CD4-positive, alpha-beta T cell (primary cell): ENCODE measurements at regions of chr3 and their contacts with region 1.

Region 1: DNA sequence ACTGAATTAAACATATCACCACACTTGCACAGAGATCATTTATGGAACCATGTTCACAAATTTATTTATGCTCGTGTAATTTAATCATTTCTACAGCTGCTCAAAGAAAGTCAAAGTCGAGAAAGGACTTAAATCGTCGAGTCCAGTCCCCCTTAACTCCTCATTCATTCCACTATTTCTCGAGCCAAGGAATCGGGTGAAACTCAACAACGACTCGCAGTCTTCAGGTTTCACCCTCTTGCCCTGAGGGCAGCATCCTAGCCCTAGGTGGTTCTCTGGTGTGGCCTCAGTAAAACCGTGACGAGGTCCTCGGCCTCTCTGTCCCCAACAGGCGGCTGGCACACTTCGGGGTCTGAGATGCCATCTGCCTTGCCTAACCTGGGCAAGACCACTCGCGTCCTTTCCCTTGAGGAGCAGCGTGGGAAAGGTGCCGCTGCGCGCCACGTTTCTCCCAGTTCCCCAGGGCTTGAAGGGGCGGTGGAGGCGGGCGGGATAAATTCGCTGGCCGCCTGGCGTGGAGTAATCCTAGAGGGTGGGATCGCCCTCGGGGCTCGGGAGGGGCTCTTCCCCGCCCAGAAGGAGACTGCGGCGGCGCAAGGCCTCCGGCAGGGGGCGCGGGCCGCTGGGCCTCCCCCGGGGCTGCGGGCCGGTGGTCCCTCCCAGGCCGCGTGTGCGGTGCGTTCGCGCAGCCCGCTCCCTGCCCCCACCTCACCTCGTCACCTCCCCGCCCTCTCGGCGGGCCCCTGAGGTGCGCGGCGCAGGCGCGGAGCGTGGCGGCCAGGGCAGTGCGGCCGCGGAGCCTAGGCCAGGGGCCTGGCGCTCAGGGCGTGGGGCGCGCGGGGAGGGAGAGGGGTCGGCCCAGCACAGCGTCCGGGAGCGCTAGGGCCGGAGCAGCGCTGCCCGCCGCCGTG is at the start of gene ZNF639:
- DNase-seq: peak; percentile 73 to 95 (median 80)
- ATAC-seq: peak; percentile 84
- H3K4me3 ChIP-seq: peak within 1 kb of the TSS; percentile 72
- H3K4me3 Mint-ChIP-seq: peak within 1 kb of the TSS; percentile 92
- H3K27ac ChIP-seq: peak within 1 kb of the TSS; percentile 76 to 97
- H3K27ac Mint-ChIP-seq: peak within 1 kb of the TSS; percentile 98
- H3K4me1 ChIP-seq: peaks cover 25% of the 10 kb centered on the region
- H3K4me1 Mint-ChIP-seq: peaks cover 37% of the 10 kb centered on the region
- H3K27me3 ChIP-seq: no peaks in the 10 kb centered on the region
- H3K27me3 Mint-ChIP-seq: no peaks in the 10 kb centered on the region
- CTCF ChIP-seq: peak; percentile 73
- total RNA-seq, gene ZNF639: 88.1 to 90.8 TPM

Region 2: GRCh38 chr3:179015551-179016020 is 307.0 kb before region 1 on chr3:
- CTCF ChIA-PET with region 1: interaction called, 3 read pairs
- POLR2A ChIA-PET with region 1: interaction called, 7 read pairs
- intact Hi-C with region 1: loop called in 1 of 2 experiments (anchors 2 kb)
- DNase-seq: peak in 12 of 14 experiments; percentile 6 to 90 (median 58)
- ATAC-seq: peak; percentile 98
- H3K4me3 ChIP-seq: no peak overlapping the region
- H3K4me3 Mint-ChIP-seq: no peak overlapping the region
- H3K27ac ChIP-seq: no peak overlapping the region
- H3K27ac Mint-ChIP-seq: peak overlapping the region; percentile 31
- H3K4me1 ChIP-seq: peaks cover 4% of the 10 kb centered on the region
- H3K4me1 Mint-ChIP-seq: peaks cover 45% of the 10 kb centered on the region
- H3K27me3 ChIP-seq: no peaks in the 10 kb centered on the region
- H3K27me3 Mint-ChIP-seq: no peaks in the 10 kb centered on the region
- CTCF ChIP-seq: peak; percentile 88

Region 3: DNA sequence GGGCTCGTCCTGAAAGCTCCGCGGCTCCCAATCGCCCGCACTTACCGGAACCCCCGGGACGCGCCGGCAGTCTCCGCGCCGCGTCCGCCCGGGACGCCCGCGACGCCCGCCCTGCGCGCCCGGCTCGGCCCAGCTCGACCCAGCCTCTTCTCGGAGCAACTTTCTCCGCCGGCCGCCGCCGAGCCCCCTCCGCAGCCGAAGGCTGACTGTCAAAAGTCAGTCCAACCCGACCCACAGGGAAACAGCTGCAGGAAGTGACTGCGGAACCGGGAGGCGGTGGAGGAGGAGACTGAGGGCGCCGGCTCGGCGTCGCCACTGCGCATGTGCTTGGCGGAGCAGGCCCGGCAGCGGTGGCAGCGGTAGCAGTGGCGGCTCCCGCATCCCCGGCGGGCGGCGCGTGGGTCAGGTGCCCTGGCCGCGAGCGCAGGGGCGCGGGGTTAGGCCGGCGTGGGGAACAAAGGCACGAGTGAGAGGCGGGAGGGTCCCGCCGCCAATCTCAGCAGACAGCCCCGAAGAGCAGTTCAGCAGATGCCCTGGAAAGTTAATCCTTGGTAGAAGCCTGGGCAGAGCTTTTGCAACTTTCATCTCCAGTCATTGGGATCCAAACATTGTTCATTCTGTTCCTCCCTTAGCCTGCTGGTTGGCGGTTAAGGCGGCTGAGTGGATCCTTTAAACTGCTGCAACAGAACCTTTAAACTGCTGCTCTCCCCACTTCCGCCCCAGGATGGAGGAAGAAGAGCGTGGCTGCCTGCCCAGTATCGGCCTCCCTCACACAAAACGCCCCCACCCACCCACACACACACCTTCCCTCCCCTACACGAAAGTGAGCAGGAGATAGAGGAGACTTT is 250.8 kb before region 1 on chr3 and contains the start of gene ZMAT3:
- CTCF ChIA-PET with region 1: interaction called, 3 read pairs
- POLR2A ChIA-PET with region 1: interaction called, 13 read pairs
- intact Hi-C with region 1: loop called in 1 of 2 experiments (anchors 2 kb)
- DNase-seq: peak; percentile 72 to 94 (median 81)
- ATAC-seq: peak; percentile 81
- H3K4me3 ChIP-seq: peak within 1 kb of the TSS; percentile 78
- H3K4me3 Mint-ChIP-seq: peak within 1 kb of the TSS; percentile 99
- H3K27ac ChIP-seq: peak within 1 kb of the TSS; percentile 76 to 92
- H3K27ac Mint-ChIP-seq: peak within 1 kb of the TSS; percentile 86
- H3K4me1 ChIP-seq: peaks cover 30% of the 10 kb centered on the region
- H3K4me1 Mint-ChIP-seq: peaks cover 69% of the 10 kb centered on the region
- H3K27me3 ChIP-seq: no peaks in the 10 kb centered on the region
- H3K27me3 Mint-ChIP-seq: no peaks in the 10 kb centered on the region
- CTCF ChIP-seq: no peak
- total RNA-seq, gene ZMAT3: 10.2 to 13.0 TPM

Region 4: GRCh38 chr3:179562591-179563270 is 240.2 kb after region 1 on chr3 and contains the start of gene ACTL6A:
- CTCF ChIA-PET with region 1: no interaction called
- POLR2A ChIA-PET with region 1: interaction called, 5 read pairs
- intact Hi-C with region 1: loop called (anchors 5 kb)
- DNase-seq: peak; percentile 94 to 99 (median 98)
- ATAC-seq: peak; percentile 90
- H3K4me3 ChIP-seq: peak within 1 kb of the TSS; percentile 83
- H3K4me3 Mint-ChIP-seq: peak within 1 kb of the TSS; percentile 91
- H3K27ac ChIP-seq: peak within 1 kb of the TSS; percentile 38 to 57
- H3K27ac Mint-ChIP-seq: peak within 1 kb of the TSS; percentile 85
- H3K4me1 ChIP-seq: peaks cover 31% of the 10 kb centered on the region
- H3K4me1 Mint-ChIP-seq: peaks cover 30% of the 10 kb centered on the region
- H3K27me3 ChIP-seq: no peaks in the 10 kb centered on the region
- H3K27me3 Mint-ChIP-seq: peaks cover 5% of the 10 kb centered on the region
- CTCF ChIP-seq: no peak
- total RNA-seq, gene ACTL6A: 19.0 to 19.3 TPM

Region 5: DNA sequence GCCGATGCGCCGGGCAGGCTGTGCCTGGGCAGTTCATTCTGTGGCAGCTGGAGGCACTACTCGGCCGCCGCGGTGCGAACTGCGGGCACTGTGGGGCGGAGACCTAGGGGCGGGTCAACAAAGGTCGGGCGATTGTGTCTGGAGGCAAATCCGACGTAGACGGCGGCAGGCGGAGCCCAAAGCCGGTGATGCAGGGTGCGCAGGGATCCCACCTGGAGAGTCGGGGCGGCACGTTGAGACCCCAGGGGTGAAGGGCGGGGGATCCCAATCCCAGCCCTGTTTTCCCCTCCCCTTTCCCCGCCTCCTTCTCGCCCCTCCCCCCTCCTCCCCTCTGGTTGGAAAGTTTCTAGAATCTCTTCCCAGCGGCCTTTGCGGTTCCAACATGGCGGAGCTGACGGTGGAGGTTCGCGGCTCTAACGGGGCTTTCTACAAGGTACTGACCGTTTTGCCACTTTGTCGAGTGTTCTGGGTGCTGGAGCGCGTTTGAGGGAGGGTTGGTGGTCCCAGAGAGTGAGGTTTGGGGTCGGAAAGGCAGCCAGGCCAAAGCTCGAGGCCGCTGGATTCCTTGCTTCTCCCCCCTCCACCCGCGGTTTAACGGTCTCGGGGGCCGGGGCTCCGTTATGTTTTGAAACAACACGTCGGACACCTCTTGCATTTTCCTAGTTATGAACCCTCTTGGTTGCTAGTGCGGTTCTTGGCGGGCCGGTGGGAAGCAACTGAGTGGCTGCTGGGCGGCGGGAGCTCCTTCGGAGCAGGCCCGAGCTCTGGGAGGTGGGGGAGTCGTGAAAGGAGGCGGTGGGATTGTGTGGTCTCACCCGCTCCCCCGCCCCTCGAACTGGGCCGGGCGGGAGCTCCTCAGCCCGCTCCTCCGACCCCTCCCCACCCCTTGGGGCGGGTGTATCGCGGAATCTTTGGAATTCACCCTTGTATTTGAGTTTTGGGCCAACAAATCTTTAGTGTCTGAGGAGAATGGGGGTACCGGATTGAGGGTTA is 1590.1 kb after region 1 on chr3 and contains the start of gene FXR1:
- CTCF ChIA-PET with region 1: no interaction called
- POLR2A ChIA-PET with region 1: no interaction called
- intact Hi-C with region 1: loop called in 1 of 2 experiments (anchors 10 kb)
- DNase-seq: peak; percentile 79 to 94 (median 85)
- ATAC-seq: peak; percentile 90
- H3K4me3 ChIP-seq: peak within 1 kb of the TSS; percentile 98
- H3K4me3 Mint-ChIP-seq: peak within 1 kb of the TSS; percentile 97
- H3K27ac ChIP-seq: peak within 1 kb of the TSS; percentile 89 to 94
- H3K27ac Mint-ChIP-seq: peak within 1 kb of the TSS; percentile 94
- H3K4me1 ChIP-seq: peaks cover 29% of the 10 kb centered on the region
- H3K4me1 Mint-ChIP-seq: peaks cover 65% of the 10 kb centered on the region
- H3K27me3 ChIP-seq: no peaks in the 10 kb centered on the region
- H3K27me3 Mint-ChIP-seq: no peaks in the 10 kb centered on the region
- CTCF ChIP-seq: peak; percentile 68
- total RNA-seq, gene FXR1: 172 to 174 TPM